ENCODE measurements at regions of chr11 and their contacts with region 1.

Region 1: DNA sequence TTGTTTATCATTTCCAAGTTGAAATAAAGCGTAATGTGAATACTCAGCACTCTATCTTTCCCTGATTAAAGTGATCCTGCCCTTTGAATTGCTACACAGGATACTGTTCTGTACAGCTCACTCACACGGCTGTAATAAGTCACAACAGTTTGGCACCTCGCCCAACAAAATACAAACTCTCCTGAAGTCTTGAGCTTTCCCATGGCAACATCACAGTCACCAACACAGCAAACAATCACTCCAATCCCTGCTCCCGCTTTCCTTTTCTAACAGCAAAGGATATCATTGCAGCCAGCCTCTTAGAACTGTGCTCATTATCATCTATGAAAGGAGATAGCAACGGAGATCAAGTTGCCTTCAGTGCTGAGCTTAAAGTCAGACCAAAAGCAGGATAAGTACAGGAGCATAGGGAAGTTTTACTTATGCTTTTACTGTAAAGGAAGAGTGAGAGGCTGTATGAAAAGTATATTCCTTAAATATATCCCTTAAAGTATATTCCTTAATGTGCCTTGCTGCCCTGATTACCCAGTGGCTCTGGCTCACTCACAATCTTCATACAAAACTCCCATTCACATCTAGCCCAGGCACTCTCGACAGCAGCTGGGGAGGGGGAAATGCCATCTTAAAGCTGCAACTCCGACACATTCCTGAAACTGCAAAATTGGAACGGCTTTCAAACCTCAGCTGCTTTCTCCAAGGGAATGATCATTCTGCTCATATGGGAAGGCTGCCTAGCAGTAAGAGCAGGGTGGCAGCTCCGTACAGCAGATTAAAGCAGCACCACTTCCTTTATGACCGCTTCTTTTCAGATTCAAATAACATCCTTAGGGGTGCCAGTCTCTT is 35.8 kb downstream of the MAML2 start:
- DNase-seq: peak in 4 of 5 donors; percentile 87 to 90 (median 88)
- ATAC-seq: peak; percentile 90 to 97 (median 94)
- H3K4me3 ChIP-seq: peak overlapping the region in 10 of 12 donors; percentile 13 to 48 (median 35)
- H3K27ac ChIP-seq: peak overlapping the region; percentile 34 to 85 (median 76)
- H3K4me1 ChIP-seq: peaks cover 9 to 96% (median 54%) of the 10 kb centered on the region in 12 donors
- H3K27me3 ChIP-seq: no peaks in the 10 kb centered on the region
- CTCF ChIP-seq: no peak
- POLR2A ChIP-seq: peak in 1 of 2 donors; percentile 24

Region 2: DNA sequence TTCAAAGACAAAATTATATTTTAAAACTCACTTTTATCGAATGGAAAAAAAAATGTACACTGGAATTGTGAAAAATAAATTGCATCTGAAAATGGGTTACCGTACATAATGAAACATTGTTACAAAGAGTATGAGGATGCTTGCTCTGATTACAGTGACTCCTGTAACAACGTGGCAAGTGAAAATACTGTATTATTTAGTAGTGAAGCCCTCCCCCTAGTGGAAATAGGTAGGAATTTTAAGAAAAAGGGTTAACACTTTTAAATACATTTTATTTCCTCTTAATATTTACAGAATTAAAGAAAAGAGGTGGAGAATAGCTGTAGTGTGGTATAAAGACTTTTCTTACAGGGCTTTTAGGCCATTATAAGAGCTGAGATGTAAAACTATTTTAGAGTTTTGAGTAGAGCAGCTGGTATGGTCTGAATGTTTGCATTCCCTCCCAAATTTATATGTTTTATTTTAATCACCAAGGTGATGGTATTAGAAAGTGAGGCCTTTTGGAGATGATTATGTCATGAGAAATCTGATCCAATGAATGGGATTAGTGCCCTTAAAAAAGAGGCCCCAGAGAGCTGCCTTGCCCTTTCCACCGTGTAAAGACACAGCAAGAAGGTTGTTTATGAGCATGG is 542.8 kb before region 1 on chr11:
- intact Hi-C with region 1: no loop called
- DNase-seq: no peak
- ATAC-seq: peak in 3 of 4 donors; percentile 61 to 69 (median 62)
- H3K4me3 ChIP-seq: no peak overlapping the region
- H3K27ac ChIP-seq: no peak overlapping the region
- H3K4me1 ChIP-seq: peaks cover 0 to 16% (median 0%) of the 10 kb centered on the region in 12 donors
- H3K27me3 ChIP-seq: no peaks in the 10 kb centered on the region
- CTCF ChIP-seq: peak; percentile 56 to 85 (median 71)
- POLR2A ChIP-seq: no peak

Region 3: GRCh38 chr11:95799546-95799945 is 507.6 kb before region 1 on chr11:
- intact Hi-C with region 1: no loop called
- DNase-seq: no peak
- ATAC-seq: no peak
- H3K4me3 ChIP-seq: no peak overlapping the region
- H3K27ac ChIP-seq: no peak overlapping the region
- H3K4me1 ChIP-seq: no peaks in the 10 kb centered on the region
- H3K27me3 ChIP-seq: no peaks in the 10 kb centered on the region
- CTCF ChIP-seq: no peak
- POLR2A ChIP-seq: no peak

Region 4: DNA sequence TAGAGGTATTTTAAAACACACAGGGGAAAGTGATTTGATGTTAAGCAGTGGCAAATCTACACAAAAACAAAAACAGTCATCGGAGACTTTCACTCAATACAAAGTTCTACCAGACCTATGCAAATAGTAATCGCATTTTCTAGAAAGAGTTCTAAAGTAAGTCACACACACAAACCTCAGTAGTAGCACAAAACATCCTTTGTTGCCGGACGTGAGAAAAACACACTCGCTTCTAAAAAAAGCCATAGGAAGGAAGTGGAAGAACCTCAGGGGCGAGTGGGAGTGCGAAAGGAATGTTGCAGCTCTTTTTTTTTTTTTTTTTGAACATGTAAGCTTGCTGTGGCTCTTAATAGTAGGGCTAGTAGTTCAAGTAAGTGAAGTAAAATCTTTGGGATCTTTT is 53.1 kb before region 1 on chr11:
- intact Hi-C with region 1: loop called in 1 of 10 experiments (anchors 10 kb)
- DNase-seq: peak in 4 of 5 donors; percentile 42 to 71 (median 53)
- ATAC-seq: peak in 3 of 4 donors; percentile 43 to 79 (median 65)
- H3K4me3 ChIP-seq: peak overlapping the region in 6 of 12 donors; percentile 8 to 30 (median 20)
- H3K27ac ChIP-seq: peak overlapping the region; percentile 12 to 73 (median 41)
- H3K4me1 ChIP-seq: peaks cover 0 to 63% (median 46%) of the 10 kb centered on the region in 12 donors
- H3K27me3 ChIP-seq: no peaks in the 10 kb centered on the region
- CTCF ChIP-seq: no peak
- POLR2A ChIP-seq: no peak

Measured in heart left ventricle (tissue), 16 donors.